ENCODE measurements at regions of chr6 and their contacts with region 1.

Region 1: GRCh38 chr6:80094017-80094416 is 12.5 kb upstream of the BCKDHB start:
- DNase-seq: no peak
- ATAC-seq: no peak
- H3K4me3 ChIP-seq: no peak overlapping the region
- H3K27ac ChIP-seq: no peak overlapping the region
- H3K4me1 ChIP-seq: no peaks in the 10 kb centered on the region
- H3K27me3 ChIP-seq: no peaks in the 10 kb centered on the region
- CTCF ChIP-seq: peak in 4 of 5 experiments; percentile 3 to 39 (median 27)
- POLR2A ChIP-seq: no peak

Region 2: DNA sequence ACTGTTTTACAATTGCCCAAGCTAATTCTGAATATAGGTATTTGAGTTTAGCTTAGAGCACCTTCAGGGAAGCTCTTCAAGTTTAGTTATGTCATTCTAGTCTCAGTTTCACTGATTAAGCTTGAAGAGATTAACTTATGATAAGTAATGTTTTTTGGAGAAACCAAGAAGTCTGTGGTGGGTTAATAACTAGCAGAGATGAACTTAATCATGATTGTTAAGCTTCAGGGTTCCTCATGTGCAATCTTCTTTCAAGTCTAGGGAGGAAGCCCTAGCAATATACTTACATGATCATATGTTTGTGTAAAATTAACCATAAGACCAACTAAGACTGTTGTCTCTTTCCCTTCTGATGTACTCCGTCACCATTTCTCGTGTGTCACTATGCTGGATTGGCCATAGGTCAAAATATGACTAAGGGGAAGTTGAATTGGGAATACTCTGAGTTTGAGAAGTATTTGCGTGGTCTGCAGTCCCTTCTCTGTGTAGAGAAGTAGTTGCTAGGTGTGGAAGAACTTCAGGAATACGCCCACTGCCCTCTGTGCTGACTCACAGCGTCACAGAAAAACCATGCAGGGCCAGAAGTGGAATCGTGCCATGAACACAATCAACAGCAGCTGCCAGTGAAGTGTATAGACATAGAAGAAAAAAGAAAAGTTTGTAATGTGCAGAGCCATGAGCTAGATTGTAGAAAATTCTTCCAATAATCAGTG is 374.6 kb before region 1 on chr6:
- in situ Hi-C with region 1: no loop called
- intact Hi-C with region 1: no loop called
- DNase-seq: no peak
- ATAC-seq: no peak
- H3K4me3 ChIP-seq: no peak overlapping the region
- H3K27ac ChIP-seq: no peak overlapping the region
- H3K4me1 ChIP-seq: no peaks in the 10 kb centered on the region
- H3K27me3 ChIP-seq: no peaks in the 10 kb centered on the region
- CTCF ChIP-seq: no peak
- POLR2A ChIP-seq: no peak

Region 3: GRCh38 chr6:79777713-79778579 is 316.1 kb before region 1 on chr6:
- in situ Hi-C with region 1: no loop called
- intact Hi-C with region 1: loop called (anchors 5 kb)
- DNase-seq: peak; percentile 29 to 37
- ATAC-seq: peak; percentile 73 to 79
- H3K4me3 ChIP-seq: peak overlapping the region; percentile 18 to 49 (median 32)
- H3K27ac ChIP-seq: no peak overlapping the region
- H3K4me1 ChIP-seq: no peaks in the 10 kb centered on the region
- H3K27me3 ChIP-seq: no peaks in the 10 kb centered on the region
- CTCF ChIP-seq: peak; percentile 47 to 95 (median 82)
- POLR2A ChIP-seq: no peak

Region 4: DNA sequence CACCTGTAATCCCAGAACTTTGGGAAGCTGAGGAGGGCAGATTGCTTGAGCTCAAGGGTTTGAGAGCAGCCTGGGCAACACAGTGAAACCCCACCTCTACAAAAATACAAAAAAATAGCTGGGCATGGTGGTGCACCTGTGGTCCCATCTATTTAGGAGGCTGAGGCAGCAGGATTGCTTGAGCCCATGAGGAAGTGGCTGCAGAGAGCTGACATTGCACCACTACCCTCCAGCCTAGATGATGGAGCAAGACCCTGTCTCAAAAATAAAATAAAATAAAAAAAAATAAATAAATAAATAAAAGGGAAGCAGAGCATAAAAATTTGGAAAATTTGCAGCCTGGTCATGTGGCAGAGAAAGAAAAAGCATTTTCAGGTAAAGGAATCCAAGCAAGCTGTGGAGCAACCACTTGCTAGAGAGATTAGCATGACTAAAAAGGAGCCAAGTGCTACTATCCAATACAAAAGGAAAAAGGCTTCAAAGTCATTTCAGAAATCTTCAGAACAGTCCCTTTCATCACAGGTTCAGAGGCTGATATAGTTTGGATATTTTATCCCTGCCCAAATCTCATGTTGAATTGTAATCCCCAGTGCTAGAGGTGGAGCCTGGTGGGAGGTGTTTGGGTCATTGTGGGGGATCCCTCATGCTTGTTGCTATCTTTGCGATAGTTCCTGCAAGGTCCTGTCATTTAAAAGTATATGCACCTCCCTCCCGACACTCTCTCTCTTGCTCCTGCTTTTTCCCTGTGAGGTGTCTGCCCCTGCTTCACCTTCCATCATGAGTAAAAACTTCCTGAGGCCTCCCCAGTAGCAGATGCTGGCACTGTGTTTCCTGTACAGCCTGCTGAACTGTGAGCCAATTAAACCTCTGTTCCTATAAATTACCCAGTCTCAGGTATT is 100.8 kb before region 1 on chr6:
- in situ Hi-C with region 1: no loop called
- intact Hi-C with region 1: no loop called
- DNase-seq: no peak
- ATAC-seq: no peak
- H3K4me3 ChIP-seq: no peak overlapping the region
- H3K27ac ChIP-seq: no peak overlapping the region
- H3K4me1 ChIP-seq: no peaks in the 10 kb centered on the region
- H3K27me3 ChIP-seq: no peaks in the 10 kb centered on the region
- CTCF ChIP-seq: no peak
- POLR2A ChIP-seq: no peak

Region 5: GRCh38 chr6:80143419-80143937 is 49.5 kb after region 1 on chr6:
- in situ Hi-C with region 1: no loop called
- intact Hi-C with region 1: no loop called
- DNase-seq: no peak
- ATAC-seq: no peak
- H3K4me3 ChIP-seq: no peak overlapping the region
- H3K27ac ChIP-seq: no peak overlapping the region
- H3K4me1 ChIP-seq: peaks cover 5 to 14% of the 10 kb centered on the region in 2 donors
- H3K27me3 ChIP-seq: no peaks in the 10 kb centered on the region
- CTCF ChIP-seq: no peak
- POLR2A ChIP-seq: no peak

Region 6: GRCh38 chr6:80163658-80164187 is 69.7 kb after region 1 on chr6:
- in situ Hi-C with region 1: no loop called
- intact Hi-C with region 1: no loop called
- DNase-seq: no peak
- ATAC-seq: peak in 1 of 2 donors; percentile 62
- H3K4me3 ChIP-seq: no peak overlapping the region
- H3K27ac ChIP-seq: no peak overlapping the region
- H3K4me1 ChIP-seq: no peaks in the 10 kb centered on the region
- H3K27me3 ChIP-seq: no peaks in the 10 kb centered on the region
- CTCF ChIP-seq: no peak
- POLR2A ChIP-seq: no peak

Measured in gastrocnemius medialis (tissue), 4 donors.